ENCODE measurements at regions of chr1 and their contacts with region 1.

Region 1: DNA sequence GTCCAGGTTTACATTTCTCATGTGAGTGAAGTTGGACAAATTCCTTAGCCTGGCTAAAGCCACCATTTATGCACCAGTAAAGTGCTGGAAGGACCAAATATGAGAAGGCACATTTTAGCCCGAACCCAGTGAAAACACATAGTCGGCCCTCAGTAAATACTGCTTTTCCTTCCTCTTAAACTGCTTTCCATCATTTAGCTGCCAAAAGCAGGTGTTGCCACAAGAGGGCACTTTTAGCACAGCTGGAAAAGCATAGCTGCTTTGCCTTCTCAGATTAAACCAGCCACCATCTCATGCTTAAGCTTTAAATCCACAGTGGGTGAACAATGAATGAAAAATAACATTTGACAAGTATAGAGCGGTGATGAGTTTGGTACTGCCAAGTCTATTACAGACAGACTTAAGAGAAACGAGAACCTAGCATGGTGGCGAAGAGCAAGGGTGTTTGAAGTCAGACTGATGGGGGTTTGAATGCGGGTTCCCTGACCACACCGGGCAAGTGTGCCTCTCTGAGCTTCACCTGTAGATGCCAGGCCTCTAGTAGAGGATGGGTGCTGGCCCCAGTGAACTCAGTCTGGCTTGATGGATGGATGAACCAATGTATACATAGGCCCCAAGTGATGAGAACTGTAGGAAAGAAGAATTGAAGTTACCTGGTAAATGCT is 57.8 kb downstream of the SLC35D1 start:
- DNase-seq: no peak

Region 2: GRCh38 chr1:67031121-67031858 is 35.1 kb after region 1 on chr1:
- intact Hi-C with region 1: no loop called
- DNase-seq: no peak

Region 3: GRCh38 chr1:67149179-67149770 is 153.1 kb after region 1 on chr1:
- intact Hi-C with region 1: loop called (anchors 5 to 10 kb)
- DNase-seq: no peak

Region 4: GRCh38 chr1:67256291-67257172 is 260.4 kb after region 1 on chr1:
- intact Hi-C with region 1: no loop called
- DNase-seq: no peak